A549 (cell line): ENCODE measurements at regions of chr1 and their contacts with region 1.

Region 1: DNA sequence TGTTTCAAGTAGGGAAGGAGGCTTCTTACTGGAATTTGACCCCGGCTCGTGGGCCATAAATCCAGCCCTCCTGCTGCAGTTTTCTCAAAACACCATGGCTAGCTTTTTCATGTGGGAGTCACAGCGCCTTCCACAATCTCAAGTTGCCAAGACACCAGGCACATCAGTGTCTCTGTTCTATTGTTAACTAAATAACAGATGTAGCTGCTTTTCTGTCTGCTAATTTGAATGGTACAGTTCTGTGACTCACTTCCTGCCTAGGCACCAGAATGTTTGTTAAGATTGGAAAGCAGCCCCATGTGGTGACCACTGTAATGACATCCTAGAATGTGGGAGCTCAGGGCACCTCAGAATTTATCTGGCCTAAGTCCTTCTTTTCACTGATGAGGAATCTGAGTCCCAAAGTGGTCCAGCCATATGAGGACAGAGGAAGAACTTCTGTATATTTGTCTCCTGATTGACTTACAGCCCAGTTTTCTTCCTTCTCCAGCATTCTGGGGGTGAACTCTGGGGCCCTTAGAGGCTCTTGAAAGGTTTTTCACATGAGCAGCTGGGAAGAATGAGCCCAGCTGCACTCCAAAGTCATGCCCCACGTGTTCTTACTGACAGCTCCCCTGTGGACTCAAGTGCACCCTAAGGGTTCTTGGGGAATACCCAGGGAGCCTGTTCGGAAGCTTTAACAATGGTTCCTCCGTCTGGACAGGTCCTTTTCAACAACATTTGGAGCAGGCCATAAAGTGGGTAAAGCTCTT is 27.5 kb downstream of the TRIM45 start:
- DNase-seq: peak; percentile 10 to 25
- ATAC-seq: peak; percentile 39 to 76; a peak in 3 of 6 replicates
- H3K4me3 ChIP-seq: no peak overlapping the region
- H3K27ac ChIP-seq: peak overlapping the region; percentile 51 to 62
- H3K4me1 ChIP-seq: peaks cover 14% of the 10 kb centered on the region
- CTCF ChIP-seq: no peak
- EP300 ChIP-seq: no peak
- POLR2A ChIP-seq: no peak
- RAD21 ChIP-seq: 0 out of 5 replicates have a peak, but pooled peaks of 1 of the 2 experiments have one; percentile 2

Region 2: GRCh38 chr1:116754198-116754977 is 339.7 kb before region 1 on chr1 and contains the start of gene CD2:
- CTCF ChIA-PET with region 1: no interaction called
- POLR2A ChIA-PET with region 1: no interaction called
- DNase-seq: no peak
- ATAC-seq: no peak
- H3K4me3 ChIP-seq: no peak within 1 kb of the TSS
- H3K27ac ChIP-seq: no peak within 1 kb of the TSS
- H3K4me1 ChIP-seq: no peaks in the 10 kb centered on the region
- CTCF ChIP-seq: no peak
- EP300 ChIP-seq: no peak
- POLR2A ChIP-seq: no peak
- RAD21 ChIP-seq: no peak
- polyA plus RNA-seq, gene CD2: not detected in 2 replicates

Region 3: DNA sequence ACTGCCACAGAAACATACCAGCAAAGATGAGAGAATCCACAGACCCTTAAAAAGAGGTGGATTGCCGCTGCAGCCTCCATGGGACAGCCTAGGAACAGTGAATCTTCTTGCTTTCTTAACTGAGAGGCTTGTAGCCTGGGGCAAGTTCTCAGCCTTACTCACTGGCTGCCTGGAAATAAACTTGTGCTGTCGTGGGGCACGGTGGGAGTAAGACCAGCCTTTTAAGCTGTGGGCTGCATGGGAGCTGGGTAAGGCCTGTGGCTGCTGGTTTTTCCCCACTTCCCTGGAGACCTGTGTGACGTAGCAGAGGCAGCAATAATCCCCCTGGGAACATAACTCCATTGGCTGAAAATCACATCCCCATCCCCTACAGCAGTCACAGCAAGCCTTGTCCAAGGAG is 309.0 kb before region 1 on chr1:
- CTCF ChIA-PET with region 1: no interaction called
- POLR2A ChIA-PET with region 1: no interaction called
- DNase-seq: no peak
- ATAC-seq: no peak
- H3K4me3 ChIP-seq: no peak overlapping the region
- H3K27ac ChIP-seq: no peak overlapping the region
- H3K4me1 ChIP-seq: no peaks in the 10 kb centered on the region
- CTCF ChIP-seq: no peak
- EP300 ChIP-seq: no peak
- POLR2A ChIP-seq: no peak
- RAD21 ChIP-seq: no peak

Region 4: DNA sequence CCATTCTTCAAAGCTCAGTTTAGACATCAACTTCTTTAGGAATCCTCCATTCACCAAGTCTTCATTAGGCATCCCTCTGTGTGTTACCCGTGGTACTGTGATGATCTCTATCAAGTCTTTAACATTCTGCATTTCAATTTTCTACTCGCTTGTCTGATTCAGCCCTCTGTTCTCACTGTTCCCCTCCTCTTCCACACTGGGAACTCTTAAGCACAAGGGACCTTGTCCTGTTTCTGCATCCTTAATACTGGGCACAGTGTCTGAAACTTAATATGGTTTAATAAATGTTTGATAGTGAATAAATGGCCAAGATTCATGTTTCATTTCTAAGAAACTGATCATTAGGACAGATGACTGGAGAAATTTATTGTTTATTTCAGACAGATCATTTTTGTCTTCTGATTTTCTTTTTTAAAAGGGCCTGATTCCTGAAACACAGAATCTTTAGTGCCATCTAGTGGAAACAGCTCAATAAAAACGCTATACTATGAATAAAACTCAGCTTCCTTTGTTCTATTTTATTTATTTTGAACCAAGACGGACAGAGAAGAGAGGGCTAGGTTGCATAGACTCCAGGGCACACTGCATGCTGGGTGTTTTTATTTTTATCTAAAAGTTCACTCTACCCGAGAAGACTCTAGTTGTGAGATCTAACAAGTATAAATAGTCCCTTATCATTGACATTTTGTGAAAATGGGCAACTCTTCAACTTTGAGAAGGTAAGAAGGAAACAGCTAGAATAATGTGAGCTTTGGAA is 34.5 kb after region 1 on chr1:
- CTCF ChIA-PET with region 1: interaction called, 14 read pairs
- POLR2A ChIA-PET with region 1: no interaction called
- DNase-seq: peak; percentile 22 to 23
- ATAC-seq: peak in 1 of 2 experiments; percentile 68; a peak in 3 of 6 replicates
- H3K4me3 ChIP-seq: no peak overlapping the region
- H3K27ac ChIP-seq: peak overlapping the region in 1 of 2 experiments; percentile 44; a peak in 1 of 6 replicates
- H3K4me1 ChIP-seq: peaks cover 4% of the 10 kb centered on the region; the same call in 1 of the 3 replicates
- CTCF ChIP-seq: peak; percentile 54
- EP300 ChIP-seq: no peak
- POLR2A ChIP-seq: no peak
- RAD21 ChIP-seq: peak; percentile 32 to 46; a peak in 4 of 5 replicates